A673 (cell line): ENCODE measurements at regions of chr2 and their contacts with region 1.

Region 1: DNA sequence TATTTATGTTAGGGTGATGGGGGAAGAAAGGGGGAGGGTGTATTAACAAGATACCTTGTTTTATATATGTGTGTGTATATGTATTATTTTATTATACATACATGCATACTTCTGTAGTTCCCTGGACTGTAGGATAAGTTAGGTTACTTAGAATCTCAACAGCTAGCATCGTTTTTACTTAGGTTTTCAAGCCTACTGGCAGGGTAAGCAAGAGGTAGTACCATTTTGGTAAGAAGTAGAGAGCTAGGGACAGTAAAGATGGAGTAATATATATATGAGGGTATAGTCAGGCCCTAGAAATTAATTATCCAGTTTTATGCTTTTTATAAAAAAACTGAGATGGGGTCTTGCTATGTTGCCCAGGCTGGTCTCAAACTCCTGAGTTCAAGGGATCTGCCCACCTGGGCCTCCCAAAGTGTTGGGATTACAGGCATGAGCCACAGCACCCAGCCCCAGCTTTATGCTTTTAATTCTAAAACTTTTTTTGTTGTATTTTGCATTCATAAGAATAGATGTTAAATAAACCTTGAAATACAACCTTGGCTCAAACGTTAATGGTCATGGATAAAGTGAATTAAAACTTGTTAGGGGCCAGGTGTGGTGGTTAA is 13.2 kb downstream of the MSH6 start:
- DNase-seq: no peak
- H3K4me3 ChIP-seq: no peak overlapping the region
- H3K27ac ChIP-seq: no peak overlapping the region
- H3K4me1 ChIP-seq: no peaks in the 10 kb centered on the region
- H3K27me3 ChIP-seq: no peaks in the 10 kb centered on the region
- CTCF ChIP-seq: no peak

Region 2: DNA sequence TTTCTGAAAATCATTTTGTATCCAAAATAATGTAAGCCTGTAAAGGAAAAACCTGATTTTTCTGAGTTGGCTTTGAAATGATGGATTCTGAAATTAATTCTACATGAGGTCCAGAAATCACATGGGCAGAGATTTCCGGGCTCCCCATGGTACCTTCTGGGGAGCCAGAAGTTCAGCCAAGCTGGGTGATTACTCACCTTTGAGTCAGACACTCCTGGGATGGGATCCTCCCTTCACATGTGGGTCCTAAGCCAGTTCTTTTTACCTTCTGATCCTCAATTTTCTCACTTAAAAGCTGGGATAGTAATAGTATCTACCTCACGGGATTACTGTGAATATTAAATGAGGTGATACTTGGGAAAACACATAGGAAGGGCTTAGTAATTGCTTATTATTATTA is 1678.8 kb before region 1 on chr2:
- CTCF ChIA-PET with region 1: no interaction called
- POLR2A ChIA-PET with region 1: no interaction called
- intact Hi-C with region 1: no loop called
- DNase-seq: no peak
- H3K4me3 ChIP-seq: no peak overlapping the region
- H3K27ac ChIP-seq: no peak overlapping the region
- H3K4me1 ChIP-seq: no peaks in the 10 kb centered on the region
- H3K27me3 ChIP-seq: no peaks in the 10 kb centered on the region
- CTCF ChIP-seq: no peak

Region 3: GRCh38 chr2:47811668-47812067 is 15.5 kb after region 1 on chr2:
- CTCF ChIA-PET with region 1: no interaction called
- POLR2A ChIA-PET with region 1: no interaction called
- intact Hi-C with region 1: loop called (anchors 2 kb)
- DNase-seq: no peak
- H3K4me3 ChIP-seq: no peak overlapping the region
- H3K27ac ChIP-seq: no peak overlapping the region
- H3K4me1 ChIP-seq: no peaks in the 10 kb centered on the region
- H3K27me3 ChIP-seq: no peaks in the 10 kb centered on the region
- CTCF ChIP-seq: no peak